ENCODE measurements at regions of chr12 and their contacts with region 1.

Region 1: GRCh38 chr12:22334410-22335290 is at the start of gene ST8SIA1:
- DNase-seq: peak in 1 of 2 donors; percentile 83
- ATAC-seq: peak; percentile 44 to 48 (median 45)
- H3K4me3 ChIP-seq: peak within 1 kb of the TSS; percentile 51
- H3K4me3 Mint-ChIP-seq: peak within 1 kb of the TSS; percentile 94
- H3K27ac ChIP-seq: peak within 1 kb of the TSS; percentile 15
- H3K27ac Mint-ChIP-seq: peak within 1 kb of the TSS; percentile 76 to 78
- H3K4me1 ChIP-seq: peaks cover 24% of the 10 kb centered on the region
- H3K4me1 Mint-ChIP-seq: peaks cover 18 to 21% of the 10 kb centered on the region in 2 donors
- H3K27me3 ChIP-seq: peaks cover 9% of the 10 kb centered on the region
- H3K27me3 Mint-ChIP-seq: peaks cover 61 to 62% of the 10 kb centered on the region in 2 donors
- CTCF ChIP-seq: no peak
- total RNA-seq, gene ST8SIA1: 0.60 to 0.79 TPM in 2 of 3 donors, not detected in the other

Region 2: GRCh38 chr12:22100958-22101748 is 233.5 kb before region 1 on chr12:
- intact Hi-C with region 1: loop called (anchors 1 kb)
- DNase-seq: peak in 1 of 2 donors; percentile 75
- ATAC-seq: peak; percentile 71 to 87 (median 77)
- H3K4me3 ChIP-seq: no peak overlapping the region
- H3K4me3 Mint-ChIP-seq: no peak overlapping the region
- H3K27ac ChIP-seq: no peak overlapping the region
- H3K27ac Mint-ChIP-seq: no peak overlapping the region
- H3K4me1 ChIP-seq: peaks cover 10% of the 10 kb centered on the region
- H3K4me1 Mint-ChIP-seq: peaks cover 0 to 10% of the 10 kb centered on the region in 2 donors
- H3K27me3 ChIP-seq: no peaks in the 10 kb centered on the region
- H3K27me3 Mint-ChIP-seq: peaks cover 6 to 19% of the 10 kb centered on the region in 2 donors
- CTCF ChIP-seq: peak; percentile 19

Region 3: GRCh38 chr12:22577667-22578066 is 243.0 kb after region 1 on chr12:
- intact Hi-C with region 1: no loop called
- DNase-seq: no peak
- ATAC-seq: no peak
- H3K4me3 ChIP-seq: no peak overlapping the region
- H3K4me3 Mint-ChIP-seq: no peak overlapping the region
- H3K27ac ChIP-seq: no peak overlapping the region
- H3K27ac Mint-ChIP-seq: no peak overlapping the region
- H3K4me1 ChIP-seq: no peaks in the 10 kb centered on the region
- H3K4me1 Mint-ChIP-seq: no peaks in the 10 kb centered on the region
- H3K27me3 ChIP-seq: no peaks in the 10 kb centered on the region
- H3K27me3 Mint-ChIP-seq: no peaks in the 10 kb centered on the region
- CTCF ChIP-seq: no peak